CD8-positive, alpha-beta T cell (primary cell): ENCODE measurements at regions of chr3 and their contacts with region 1.

Region 1: GRCh38 chr3:45688882-45689756 is at the start of gene SACM1L:
- DNase-seq: peak; percentile 88 to 99 (median 94)
- ATAC-seq: peak; percentile 85
- H3K4me3 ChIP-seq: peak within 1 kb of the TSS; percentile 66 to 84
- H3K4me3 Mint-ChIP-seq: peak within 1 kb of the TSS; percentile 86
- H3K27ac ChIP-seq: peak within 1 kb of the TSS; percentile 89 to 94
- H3K27ac Mint-ChIP-seq: peak within 1 kb of the TSS; percentile 98
- H3K4me1 ChIP-seq: peaks cover 41% of the 10 kb centered on the region
- H3K4me1 Mint-ChIP-seq: peaks cover 60% of the 10 kb centered on the region
- H3K27me3 ChIP-seq: no peaks in the 10 kb centered on the region
- H3K27me3 Mint-ChIP-seq: peaks cover 3% of the 10 kb centered on the region
- CTCF ChIP-seq: no peak
- total RNA-seq, gene SACM1L: 54.4 to 56.7 TPM

Region 2: DNA sequence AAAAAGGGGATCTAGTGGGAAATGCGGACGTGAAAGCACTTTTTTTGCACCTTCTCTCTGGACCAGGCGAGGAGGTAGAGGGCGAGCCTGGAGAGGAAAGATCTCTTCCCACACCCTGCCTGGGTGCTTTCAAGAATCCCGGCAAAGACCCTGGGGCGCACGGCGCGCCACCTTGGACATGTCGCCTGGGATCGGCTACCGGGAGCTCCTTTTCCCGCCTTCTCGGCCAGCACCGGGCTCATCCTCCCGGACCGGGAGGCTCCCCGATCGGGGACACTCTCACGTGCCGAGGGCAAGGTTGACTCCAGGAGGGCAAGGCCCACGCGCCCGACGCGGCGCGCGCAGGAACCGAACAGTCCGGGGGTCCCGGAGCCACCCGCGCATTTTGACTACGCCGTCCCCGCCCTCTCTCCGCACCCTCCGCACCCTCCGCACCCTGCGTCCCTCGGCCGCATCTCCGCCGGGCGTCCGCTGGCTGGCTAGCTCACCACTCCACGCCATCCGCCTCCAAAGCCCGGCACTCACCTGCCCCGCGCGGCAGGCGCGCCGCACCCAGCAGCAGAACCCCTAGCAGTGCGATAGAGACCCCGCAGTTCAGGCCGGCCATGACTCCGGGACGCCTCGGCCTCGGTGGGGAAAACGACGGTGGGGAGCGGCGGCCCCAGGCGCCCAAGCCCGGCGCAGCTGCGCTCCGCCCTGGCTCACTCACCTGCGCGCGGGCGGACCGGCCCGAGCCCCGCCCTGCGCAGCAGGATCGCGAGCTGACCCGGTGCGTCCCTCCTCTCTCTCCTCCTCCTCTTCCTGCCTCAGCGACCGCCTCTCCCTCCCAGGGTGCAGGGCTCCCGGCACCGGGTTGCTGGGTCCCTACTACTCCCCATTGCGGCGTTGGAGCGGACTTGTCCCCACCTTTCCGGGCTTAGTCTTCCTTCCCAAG is 543.2 kb before region 1 on chr3 and contains the start of gene CDCP1:
- CTCF ChIA-PET with region 1: no interaction called
- POLR2A ChIA-PET with region 1: no interaction called
- intact Hi-C with region 1: no loop called
- DNase-seq: no peak
- ATAC-seq: no peak
- H3K4me3 ChIP-seq: peak within 1 kb of the TSS; percentile 8 to 35
- H3K4me3 Mint-ChIP-seq: peak within 1 kb of the TSS; percentile 80
- H3K27ac ChIP-seq: no peak within 1 kb of the TSS
- H3K27ac Mint-ChIP-seq: no peak within 1 kb of the TSS
- H3K4me1 ChIP-seq: peaks cover 9% of the 10 kb centered on the region
- H3K4me1 Mint-ChIP-seq: peaks cover 17% of the 10 kb centered on the region
- H3K27me3 ChIP-seq: peaks cover 16 to 18% of the 10 kb centered on the region in 2 experiments
- H3K27me3 Mint-ChIP-seq: peaks cover 49% of the 10 kb centered on the region
- CTCF ChIP-seq: no peak
- total RNA-seq, gene CDCP1: not detected

Region 3: GRCh38 chr3:45593708-45594609 is 95.2 kb before region 1 on chr3:
- CTCF ChIA-PET with region 1: no interaction called
- POLR2A ChIA-PET with region 1: interaction called, 7 read pairs
- intact Hi-C with region 1: loop called (anchors 1 kb)
- DNase-seq: peak; percentile 35 to 84 (median 64)
- ATAC-seq: peak; percentile 80
- H3K4me3 ChIP-seq: peak overlapping the region; percentile 62 to 93
- H3K4me3 Mint-ChIP-seq: peak overlapping the region; percentile 89
- H3K27ac ChIP-seq: peak overlapping the region; percentile 62 to 67
- H3K27ac Mint-ChIP-seq: peak overlapping the region; percentile 88
- H3K4me1 ChIP-seq: peaks cover 57% of the 10 kb centered on the region
- H3K4me1 Mint-ChIP-seq: peaks cover 58% of the 10 kb centered on the region
- H3K27me3 ChIP-seq: no peaks in the 10 kb centered on the region
- H3K27me3 Mint-ChIP-seq: no peaks in the 10 kb centered on the region
- CTCF ChIP-seq: no peak

Region 4: GRCh38 chr3:45677033-45677433 is 12.1 kb before region 1 on chr3:
- CTCF ChIA-PET with region 1: interaction called, 8 read pairs
- POLR2A ChIA-PET with region 1: interaction called, 12 read pairs
- intact Hi-C with region 1: loop called in 1 of 2 experiments (anchors 1 kb)
- DNase-seq: peak; percentile 34 to 86 (median 70)
- ATAC-seq: peak; percentile 100
- H3K4me3 ChIP-seq: peak overlapping the region; percentile 29 to 45
- H3K4me3 Mint-ChIP-seq: peak overlapping the region; percentile 77
- H3K27ac ChIP-seq: peak overlapping the region; percentile 53 to 83
- H3K27ac Mint-ChIP-seq: peak overlapping the region; percentile 96
- H3K4me1 ChIP-seq: peaks cover 22% of the 10 kb centered on the region
- H3K4me1 Mint-ChIP-seq: peaks cover 28% of the 10 kb centered on the region
- H3K27me3 ChIP-seq: no peaks in the 10 kb centered on the region
- H3K27me3 Mint-ChIP-seq: no peaks in the 10 kb centered on the region
- CTCF ChIP-seq: no peak

Region 5: DNA sequence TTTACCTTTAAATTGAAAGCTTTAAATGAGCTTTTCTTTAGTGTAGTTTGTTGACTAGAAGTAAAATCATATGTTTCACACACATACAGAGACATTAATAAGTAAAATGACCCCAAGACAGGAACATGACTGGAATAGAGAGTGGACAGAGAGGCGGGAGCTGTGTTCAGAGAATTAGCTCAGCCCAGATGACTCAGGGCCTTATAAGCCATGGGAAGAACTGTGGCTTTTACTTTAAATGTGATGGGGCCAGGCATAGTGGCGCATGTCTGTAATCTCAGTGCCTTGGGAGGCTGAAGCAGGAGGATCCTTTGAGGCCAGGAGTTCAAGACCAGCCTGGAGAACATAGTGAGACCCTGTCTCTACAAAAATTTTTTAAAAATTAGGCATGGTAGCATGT is 26.8 kb after region 1 on chr3:
- CTCF ChIA-PET with region 1: interaction called, 4 read pairs
- POLR2A ChIA-PET with region 1: no interaction called
- intact Hi-C with region 1: loop called in 1 of 2 experiments (anchors 2 kb)
- DNase-seq: no peak
- ATAC-seq: no peak
- H3K4me3 ChIP-seq: no peak overlapping the region
- H3K4me3 Mint-ChIP-seq: no peak overlapping the region
- H3K27ac ChIP-seq: no peak overlapping the region
- H3K27ac Mint-ChIP-seq: no peak overlapping the region
- H3K4me1 ChIP-seq: no peaks in the 10 kb centered on the region
- H3K4me1 Mint-ChIP-seq: peaks cover 14% of the 10 kb centered on the region
- H3K27me3 ChIP-seq: no peaks in the 10 kb centered on the region
- H3K27me3 Mint-ChIP-seq: no peaks in the 10 kb centered on the region
- CTCF ChIP-seq: no peak

Region 6: GRCh38 chr3:45730409-45731154 is 41.5 kb after region 1 on chr3:
- CTCF ChIA-PET with region 1: no interaction called
- POLR2A ChIA-PET with region 1: no interaction called
- intact Hi-C with region 1: no loop called
- DNase-seq: no peak
- ATAC-seq: no peak
- H3K4me3 ChIP-seq: no peak overlapping the region
- H3K4me3 Mint-ChIP-seq: no peak overlapping the region
- H3K27ac ChIP-seq: no peak overlapping the region
- H3K27ac Mint-ChIP-seq: peak overlapping the region; percentile 60
- H3K4me1 ChIP-seq: no peaks in the 10 kb centered on the region
- H3K4me1 Mint-ChIP-seq: peaks cover 19% of the 10 kb centered on the region
- H3K27me3 ChIP-seq: no peaks in the 10 kb centered on the region
- H3K27me3 Mint-ChIP-seq: no peaks in the 10 kb centered on the region
- CTCF ChIP-seq: no peak

Region 7: DNA sequence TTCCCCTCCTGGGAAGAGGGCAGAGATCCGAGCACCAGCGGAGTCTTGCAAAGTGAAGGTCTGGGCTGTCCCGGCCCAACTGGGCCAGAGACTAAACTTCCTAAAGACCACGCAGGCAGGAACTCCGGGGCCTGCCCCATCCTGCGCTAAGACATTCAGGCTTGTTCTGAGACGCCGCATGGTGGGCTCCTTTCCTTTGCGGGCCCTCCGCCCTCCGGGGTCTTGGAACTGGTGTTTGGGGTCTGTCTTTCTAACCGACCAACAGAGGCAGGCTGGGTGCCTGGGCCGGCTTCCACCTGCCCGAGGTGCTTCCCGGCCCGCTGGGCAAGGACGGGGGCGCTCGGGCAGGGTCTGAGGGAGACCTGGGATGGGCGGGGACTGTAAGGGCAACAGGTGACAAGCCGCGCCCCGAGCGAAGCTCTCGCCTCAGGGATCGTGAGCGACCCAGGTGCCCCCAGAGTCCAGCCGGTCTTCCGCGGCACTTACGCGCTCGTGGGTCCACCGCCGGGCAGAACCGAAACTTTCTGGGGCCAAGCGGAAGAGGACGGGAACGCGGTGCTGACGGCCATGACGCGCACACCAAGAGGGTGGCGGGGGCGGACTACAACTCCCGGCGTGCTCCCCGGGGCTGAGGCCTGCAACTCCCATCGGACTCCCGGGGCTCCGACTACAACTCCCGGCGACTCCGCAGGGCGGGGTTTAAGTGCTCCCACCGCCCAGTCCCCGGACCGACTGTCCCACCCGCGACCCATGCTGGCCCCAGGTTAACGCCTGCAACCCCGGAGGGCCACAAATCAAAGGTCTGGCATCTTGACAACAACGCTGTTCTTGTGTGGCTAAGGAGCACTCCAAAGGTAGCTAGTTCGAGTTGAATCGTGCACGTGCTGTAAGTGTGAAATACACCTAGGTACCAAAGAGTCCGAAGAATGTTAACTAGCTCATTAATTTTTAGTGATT is 306.4 kb after region 1 on chr3 and contains the start of gene FYCO1:
- CTCF ChIA-PET with region 1: no interaction called
- POLR2A ChIA-PET with region 1: no interaction called
- intact Hi-C with region 1: loop called in 1 of 2 experiments (anchors 2 kb)
- DNase-seq: peak; percentile 70 to 93 (median 85)
- ATAC-seq: peak; percentile 78
- H3K4me3 ChIP-seq: peak within 1 kb of the TSS; percentile 77 to 90
- H3K4me3 Mint-ChIP-seq: peak within 1 kb of the TSS; percentile 86
- H3K27ac ChIP-seq: peak within 1 kb of the TSS; percentile 77 to 93
- H3K27ac Mint-ChIP-seq: peak within 1 kb of the TSS; percentile 93
- H3K4me1 ChIP-seq: peaks cover 42% of the 10 kb centered on the region
- H3K4me1 Mint-ChIP-seq: peaks cover 44% of the 10 kb centered on the region
- H3K27me3 ChIP-seq: no peaks in the 10 kb centered on the region
- H3K27me3 Mint-ChIP-seq: no peaks in the 10 kb centered on the region
- CTCF ChIP-seq: no peak
- total RNA-seq, gene FYCO1: 16.6 to 16.7 TPM